ENCODE measurements at regions of chr19 and their contacts with region 1.

Region 1: DNA sequence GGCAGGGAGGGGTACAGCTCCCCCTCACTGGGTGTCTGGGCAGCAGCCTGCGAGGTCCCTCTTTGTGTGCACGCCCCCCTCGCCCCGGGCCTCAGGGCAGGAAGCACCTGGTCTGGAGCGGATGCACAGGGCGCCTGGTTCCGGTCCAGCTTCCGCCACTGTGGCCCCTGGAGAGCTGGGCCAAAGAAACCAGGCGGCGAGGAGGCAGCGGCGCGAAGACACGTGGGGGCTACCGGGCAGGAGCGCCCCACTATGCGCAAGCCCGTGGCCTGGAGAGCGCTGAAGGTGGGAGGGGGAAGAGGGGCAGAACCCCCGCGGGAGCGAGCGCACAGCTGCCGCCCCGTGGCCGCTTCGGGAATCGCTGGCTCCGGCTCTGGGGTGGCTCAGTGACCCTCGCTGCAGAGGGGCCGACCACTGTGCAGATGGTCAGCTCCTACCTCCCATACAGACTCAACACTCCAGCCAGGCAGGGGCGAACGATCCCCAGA is 1.7 kb upstream of the LYL1 start:
- DNase-seq: peak; percentile 98
- H3K4me3 ChIP-seq: peak overlapping the region; percentile 33 to 88 (median 56)
- H3K27ac ChIP-seq: peak overlapping the region; percentile 74 to 99 (median 97)
- H3K4me1 ChIP-seq: peaks cover 25 to 82% (median 72%) of the 10 kb centered on the region in 6 donors
- H3K27me3 ChIP-seq: no peaks in the 10 kb centered on the region
- CTCF ChIP-seq: peak; percentile 80 to 97 (median 92)
- POLR2A ChIP-seq: no peak

Region 2: DNA sequence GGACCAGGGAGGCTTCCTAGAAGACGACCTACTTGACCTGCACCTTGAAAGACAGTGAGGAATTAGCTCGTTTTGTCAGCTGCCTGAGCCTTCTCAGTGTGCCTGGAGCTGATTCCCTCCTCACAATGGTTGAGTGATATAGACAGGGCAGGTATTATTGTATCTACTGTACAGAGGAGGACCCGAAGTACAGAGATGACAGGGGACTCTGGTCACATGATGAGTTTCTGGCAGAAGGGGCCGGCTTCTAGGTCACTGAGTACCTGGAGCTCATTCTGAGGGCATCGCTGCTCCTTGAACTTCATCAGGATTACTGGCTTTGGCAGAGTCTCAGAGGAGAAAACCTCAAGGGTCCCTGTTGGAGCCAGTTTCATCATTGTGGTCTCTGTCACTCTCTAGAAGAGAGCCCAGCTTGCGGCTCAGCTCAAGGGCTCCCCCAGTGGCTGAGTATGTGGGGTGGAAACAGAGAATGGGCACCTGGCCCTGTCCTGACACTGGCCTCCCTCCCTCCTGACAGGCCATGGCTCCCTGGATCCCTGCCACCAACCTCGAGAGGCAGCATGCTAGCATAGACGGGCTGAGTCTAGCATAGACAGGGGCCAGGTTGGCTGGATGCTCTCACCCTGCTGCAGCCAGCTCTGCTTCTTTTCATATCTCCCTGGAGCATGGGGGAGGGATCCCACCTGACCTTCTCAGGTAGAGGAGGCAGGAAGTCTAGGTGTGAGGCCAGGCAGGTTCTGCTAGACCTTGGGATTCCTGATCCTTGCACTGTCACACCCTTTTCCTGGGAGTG is 70.4 kb before region 1 on chr19:
- intact Hi-C with region 1: no loop called
- DNase-seq: no peak
- H3K4me3 ChIP-seq: no peak overlapping the region
- H3K27ac ChIP-seq: no peak overlapping the region
- H3K4me1 ChIP-seq: peaks cover 0 to 27% (median 12%) of the 10 kb centered on the region in 6 donors
- H3K27me3 ChIP-seq: no peaks in the 10 kb centered on the region
- CTCF ChIP-seq: peak; percentile 19 to 74 (median 62)
- POLR2A ChIP-seq: no peak

Region 3: DNA sequence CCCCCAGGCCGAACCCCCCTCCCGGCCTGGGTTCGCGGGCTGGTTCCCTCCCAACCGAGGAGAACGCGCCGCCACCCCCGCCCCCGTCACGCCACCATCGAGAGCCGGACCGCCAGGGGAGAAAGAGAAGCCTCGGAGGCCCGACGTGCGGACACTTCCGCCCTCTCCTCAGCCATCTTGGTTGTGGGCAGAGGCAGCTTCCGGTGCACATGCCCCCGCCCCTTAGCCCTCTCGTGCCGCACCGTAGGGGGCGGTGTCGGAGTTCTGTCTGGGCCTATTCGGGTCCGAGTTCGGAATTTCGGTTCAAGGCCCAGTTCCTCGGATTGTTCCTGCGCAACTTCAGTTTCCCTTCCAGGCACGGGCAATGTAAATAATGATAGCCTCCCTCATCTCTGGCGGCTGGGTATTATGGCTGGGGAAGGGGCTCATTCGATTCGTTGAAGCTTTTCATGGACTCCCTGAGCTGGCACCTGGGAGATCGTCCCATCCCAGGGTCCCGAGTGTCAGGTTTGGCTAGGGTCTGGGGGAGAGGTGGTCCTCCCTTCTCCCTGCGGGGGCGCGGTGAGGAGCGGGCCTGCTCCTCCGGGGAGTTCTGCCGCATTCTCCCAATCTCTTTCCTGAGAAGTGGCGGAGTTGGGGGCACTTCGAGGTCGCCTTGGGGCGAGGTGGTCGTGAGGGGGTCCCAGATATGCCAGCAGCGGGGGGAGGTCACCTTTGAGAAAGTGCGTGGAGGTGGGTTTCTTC is 46.0 kb after region 1 on chr19 and contains the starts of genes IER2 and STX10:
- intact Hi-C with region 1: loop called (anchors 5 kb)
- DNase-seq: peak; percentile 99
- H3K4me3 ChIP-seq: peak within 1 kb of the TSS; percentile 86 to 99 (median 97)
- H3K27ac ChIP-seq: peak within 1 kb of the TSS; percentile 94 to 100 (median 98)
- H3K4me1 ChIP-seq: peaks cover 15 to 63% (median 35%) of the 10 kb centered on the region in 6 donors
- H3K27me3 ChIP-seq: no peaks in the 10 kb centered on the region
- CTCF ChIP-seq: peak; percentile 68 to 88 (median 79)
- POLR2A ChIP-seq: peak in 1 of 3 donors; percentile 33
- total RNA-seq, gene IER2: 59.7 to 131 (median 104) TPM
- total RNA-seq, gene STX10: 43.8 to 89.5 (median 55.8) TPM

Measured in spleen (tissue), 13 donors.